ENCODE measurements at regions of chr1 and their contacts with region 1.

Region 1: GRCh38 chr1:58652651-58653184 is 47.1 kb downstream of the MYSM1 start:
- H3K4me3 ChIP-seq: no peak overlapping the region
- H3K27ac ChIP-seq: no peak overlapping the region
- H3K4me1 ChIP-seq: no peaks in the 10 kb centered on the region
- CTCF ChIP-seq: peak; percentile 63

Region 2: DNA sequence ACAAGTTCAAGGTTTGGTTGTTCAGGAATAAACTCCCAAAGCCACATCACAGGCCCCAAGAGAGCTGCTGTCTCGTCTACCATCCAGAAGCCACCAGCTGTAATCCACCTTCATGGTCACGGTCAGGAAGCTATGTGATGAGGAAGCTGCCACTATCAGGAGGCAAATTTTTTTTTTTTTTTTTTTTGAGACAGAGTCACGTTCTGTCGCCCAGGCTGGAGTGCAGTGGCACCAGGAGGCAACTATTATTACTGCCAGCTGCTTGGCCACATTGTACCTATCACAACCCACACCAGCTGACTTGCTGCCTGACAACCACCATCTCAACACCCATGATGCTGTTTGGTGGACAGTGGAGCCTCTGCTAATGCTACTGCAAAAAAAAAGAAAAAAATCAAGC is 230.3 kb before region 1 on chr1:
- CTCF ChIA-PET with region 1: no interaction called
- POLR2A ChIA-PET with region 1: no interaction called
- H3K4me3 ChIP-seq: no peak overlapping the region
- H3K27ac ChIP-seq: no peak overlapping the region
- H3K4me1 ChIP-seq: no peaks in the 10 kb centered on the region
- CTCF ChIP-seq: no peak

Region 3: DNA sequence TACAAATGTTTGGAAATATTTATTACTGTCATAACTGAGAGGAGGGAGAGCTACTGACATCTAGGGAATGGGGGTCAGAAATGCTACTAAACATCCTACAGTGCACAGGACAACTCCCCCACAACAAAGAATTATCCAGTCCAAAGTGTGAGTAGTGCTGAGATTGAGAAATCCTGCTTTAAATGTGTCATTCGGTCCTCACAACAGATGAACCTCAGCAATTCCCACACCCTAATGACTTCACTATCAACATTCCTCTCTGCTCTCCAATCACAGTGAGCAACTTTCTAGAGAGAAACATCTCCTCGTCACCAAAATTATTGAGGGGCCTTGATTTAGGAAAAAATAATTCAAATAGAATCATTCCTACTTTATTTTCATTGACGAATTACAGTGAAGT is 124.2 kb before region 1 on chr1:
- CTCF ChIA-PET with region 1: interaction called, 16 read pairs
- POLR2A ChIA-PET with region 1: no interaction called
- H3K4me3 ChIP-seq: no peak overlapping the region
- H3K27ac ChIP-seq: no peak overlapping the region
- H3K4me1 ChIP-seq: no peaks in the 10 kb centered on the region
- CTCF ChIP-seq: no peak

Region 4: DNA sequence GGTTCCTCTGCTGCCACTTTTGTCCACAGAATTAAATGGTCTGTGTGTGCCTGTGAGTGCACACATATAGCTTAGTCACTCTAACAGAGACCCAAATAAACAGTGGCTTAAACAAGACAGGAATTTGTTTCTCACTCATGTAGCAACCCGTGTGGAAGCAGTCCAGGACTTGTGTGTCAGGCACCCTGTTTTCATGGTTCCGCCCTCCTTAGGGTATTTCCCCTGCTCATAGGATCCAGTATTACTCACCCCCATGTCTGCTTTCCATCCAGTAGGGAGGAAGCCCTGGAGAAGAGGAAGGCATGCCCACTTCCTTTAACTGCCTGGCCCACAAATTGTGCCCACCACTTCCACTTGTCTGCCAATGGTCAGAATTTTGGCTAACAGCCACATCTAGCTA is 34.4 kb before region 1 on chr1:
- CTCF ChIA-PET with region 1: interaction called, 12 read pairs
- POLR2A ChIA-PET with region 1: interaction called, 3 read pairs
- H3K4me3 ChIP-seq: no peak overlapping the region
- H3K27ac ChIP-seq: no peak overlapping the region
- H3K4me1 ChIP-seq: no peaks in the 10 kb centered on the region
- CTCF ChIP-seq: no peak

Region 5: GRCh38 chr1:58664881-58665280 is 12.2 kb after region 1 on chr1:
- CTCF ChIA-PET with region 1: interaction called, 15 read pairs
- POLR2A ChIA-PET with region 1: no interaction called
- H3K4me3 ChIP-seq: no peak overlapping the region
- H3K27ac ChIP-seq: no peak overlapping the region
- H3K4me1 ChIP-seq: no peaks in the 10 kb centered on the region
- CTCF ChIP-seq: no peak